Activated CD4-positive, alpha-beta T cell treated with anti-CD3 and anti-CD28 coated beads for 36 hours (primary cell): ENCODE measurements at regions of chr3 and their contacts with region 1.

Region 1: GRCh38 chr3:32143849-32144757 is 37.7 kb downstream of the GPD1L start:
- DNase-seq: peak; percentile 63
- ATAC-seq: peak; percentile 80
- H3K4me3 Mint-ChIP-seq: no peak overlapping the region
- H3K27ac Mint-ChIP-seq: peak overlapping the region; percentile 8
- H3K4me1 Mint-ChIP-seq: no peaks in the 10 kb centered on the region
- H3K27me3 Mint-ChIP-seq: no peaks in the 10 kb centered on the region

Region 2: GRCh38 chr3:30779686-30780287 is 1364.3 kb before region 1 on chr3:
- CTCF ChIA-PET with region 1: no interaction called
- POLR2A ChIA-PET with region 1: no interaction called
- intact Hi-C with region 1: loop called in 1 of 2 experiments (anchors 10 kb)
- DNase-seq: peak; percentile 29
- ATAC-seq: peak; percentile 36
- H3K4me3 Mint-ChIP-seq: no peak overlapping the region
- H3K27ac Mint-ChIP-seq: no peak overlapping the region
- H3K4me1 Mint-ChIP-seq: no peaks in the 10 kb centered on the region
- H3K27me3 Mint-ChIP-seq: peaks cover 10% of the 10 kb centered on the region

Region 3: GRCh38 chr3:31724661-31725060 is 419.4 kb before region 1 on chr3:
- CTCF ChIA-PET with region 1: no interaction called
- POLR2A ChIA-PET with region 1: no interaction called
- intact Hi-C with region 1: loop called in 1 of 2 experiments (anchors 10 kb)
- DNase-seq: no peak
- ATAC-seq: peak; percentile 26
- H3K4me3 Mint-ChIP-seq: no peak overlapping the region
- H3K27ac Mint-ChIP-seq: no peak overlapping the region
- H3K4me1 Mint-ChIP-seq: no peaks in the 10 kb centered on the region
- H3K27me3 Mint-ChIP-seq: peaks cover 2% of the 10 kb centered on the region

Region 4: DNA sequence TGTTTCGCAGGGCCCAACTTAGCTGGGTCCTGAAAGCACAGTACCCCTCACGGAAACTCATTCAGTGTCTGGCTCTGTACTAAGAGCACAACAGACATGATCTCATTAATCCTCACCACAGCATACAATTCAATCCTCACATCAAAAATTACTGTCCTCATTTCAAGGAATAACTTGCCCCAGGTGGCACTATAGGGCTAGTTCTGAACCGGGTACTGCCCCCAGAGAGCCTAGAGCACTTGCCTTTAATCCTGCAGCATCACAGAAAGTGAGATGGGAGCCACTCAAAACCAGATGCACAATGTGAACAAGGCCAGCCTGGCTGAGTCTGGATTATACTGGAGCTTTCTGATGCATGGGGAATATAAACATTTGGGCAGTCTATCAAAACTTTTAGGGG is 285.7 kb before region 1 on chr3:
- CTCF ChIA-PET with region 1: no interaction called
- POLR2A ChIA-PET with region 1: no interaction called
- intact Hi-C with region 1: loop called in 1 of 2 experiments (anchors 5 kb)
- DNase-seq: no peak
- ATAC-seq: peak; percentile 44
- H3K4me3 Mint-ChIP-seq: no peak overlapping the region
- H3K27ac Mint-ChIP-seq: no peak overlapping the region
- H3K4me1 Mint-ChIP-seq: peaks cover 2% of the 10 kb centered on the region
- H3K27me3 Mint-ChIP-seq: no peaks in the 10 kb centered on the region

Region 5: DNA sequence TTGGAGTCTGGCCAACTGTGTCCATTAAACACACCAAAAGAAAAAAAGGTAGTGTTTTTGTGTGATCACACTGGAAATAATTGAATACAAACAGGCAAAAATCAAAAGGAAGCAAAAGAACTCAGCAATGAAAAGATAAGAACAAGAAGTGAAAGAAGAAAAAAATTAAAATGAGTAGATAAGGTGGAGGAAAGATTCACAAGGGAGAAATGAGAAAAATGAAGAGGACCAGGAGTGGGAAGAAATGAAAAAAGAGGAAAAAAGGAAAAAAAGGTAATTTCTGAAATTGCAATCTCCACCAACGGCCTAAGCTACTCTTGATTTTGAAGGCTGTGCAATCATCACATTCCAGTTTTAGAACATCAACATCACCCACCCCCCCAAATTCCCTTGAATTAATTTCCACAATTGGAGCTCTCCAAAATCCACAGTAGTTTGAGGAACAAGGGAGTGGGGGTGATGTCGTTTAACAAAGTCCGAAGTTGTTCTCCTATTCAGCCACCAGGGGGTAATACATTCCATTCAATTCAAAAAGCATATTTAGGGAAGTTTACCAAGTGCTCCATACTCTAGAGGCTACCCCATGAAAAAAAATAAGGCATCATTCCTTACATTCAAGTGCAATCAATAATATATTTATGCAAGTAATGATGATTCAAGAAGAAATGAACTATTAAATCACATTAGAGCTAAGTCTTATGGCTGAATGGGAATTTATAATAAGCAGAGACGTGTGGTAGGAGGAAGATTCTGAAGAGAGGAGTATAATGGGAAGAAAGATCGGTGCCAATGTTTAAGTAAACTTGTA is 125.1 kb before region 1 on chr3:
- CTCF ChIA-PET with region 1: interaction called, 41 read pairs
- POLR2A ChIA-PET with region 1: no interaction called
- intact Hi-C with region 1: loop called (anchors 1 kb)
- DNase-seq: no peak
- ATAC-seq: no peak
- H3K4me3 Mint-ChIP-seq: no peak overlapping the region
- H3K27ac Mint-ChIP-seq: no peak overlapping the region
- H3K4me1 Mint-ChIP-seq: no peaks in the 10 kb centered on the region
- H3K27me3 Mint-ChIP-seq: no peaks in the 10 kb centered on the region

Region 6: GRCh38 chr3:32077260-32078084 is 66.6 kb before region 1 on chr3:
- CTCF ChIA-PET with region 1: no interaction called
- POLR2A ChIA-PET with region 1: no interaction called
- intact Hi-C with region 1: loop called in 1 of 2 experiments (anchors 5 kb)
- DNase-seq: no peak
- ATAC-seq: no peak
- H3K4me3 Mint-ChIP-seq: no peak overlapping the region
- H3K27ac Mint-ChIP-seq: no peak overlapping the region
- H3K4me1 Mint-ChIP-seq: no peaks in the 10 kb centered on the region
- H3K27me3 Mint-ChIP-seq: peaks cover 6% of the 10 kb centered on the region

Region 7: DNA sequence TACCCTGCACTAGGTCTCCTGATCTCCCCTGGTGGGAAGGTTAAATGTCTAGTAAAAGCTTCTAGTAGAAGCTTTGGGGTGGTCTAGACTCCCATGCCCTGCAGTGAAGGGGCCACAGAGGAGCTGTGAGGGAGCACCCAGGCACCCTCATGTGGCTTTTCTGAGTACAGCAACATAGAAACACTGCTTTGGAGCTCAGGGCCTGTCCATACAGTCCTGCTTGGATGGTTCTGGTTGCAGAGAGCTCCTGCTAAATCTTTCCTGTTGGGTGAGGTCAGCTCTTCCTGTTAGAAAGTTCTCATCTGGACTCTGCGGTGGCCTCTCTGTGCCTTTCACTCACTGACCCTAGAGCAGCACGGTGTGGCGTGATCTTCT is 10.1 kb after region 1 on chr3:
- CTCF ChIA-PET with region 1: interaction called, 13 read pairs
- POLR2A ChIA-PET with region 1: no interaction called
- intact Hi-C with region 1: no loop called
- DNase-seq: no peak
- ATAC-seq: no peak
- H3K4me3 Mint-ChIP-seq: no peak overlapping the region
- H3K27ac Mint-ChIP-seq: no peak overlapping the region
- H3K4me1 Mint-ChIP-seq: no peaks in the 10 kb centered on the region
- H3K27me3 Mint-ChIP-seq: no peaks in the 10 kb centered on the region